MCF 10A (cell line): ENCODE measurements at regions of chr6 and their contacts with region 1.

Region 1: DNA sequence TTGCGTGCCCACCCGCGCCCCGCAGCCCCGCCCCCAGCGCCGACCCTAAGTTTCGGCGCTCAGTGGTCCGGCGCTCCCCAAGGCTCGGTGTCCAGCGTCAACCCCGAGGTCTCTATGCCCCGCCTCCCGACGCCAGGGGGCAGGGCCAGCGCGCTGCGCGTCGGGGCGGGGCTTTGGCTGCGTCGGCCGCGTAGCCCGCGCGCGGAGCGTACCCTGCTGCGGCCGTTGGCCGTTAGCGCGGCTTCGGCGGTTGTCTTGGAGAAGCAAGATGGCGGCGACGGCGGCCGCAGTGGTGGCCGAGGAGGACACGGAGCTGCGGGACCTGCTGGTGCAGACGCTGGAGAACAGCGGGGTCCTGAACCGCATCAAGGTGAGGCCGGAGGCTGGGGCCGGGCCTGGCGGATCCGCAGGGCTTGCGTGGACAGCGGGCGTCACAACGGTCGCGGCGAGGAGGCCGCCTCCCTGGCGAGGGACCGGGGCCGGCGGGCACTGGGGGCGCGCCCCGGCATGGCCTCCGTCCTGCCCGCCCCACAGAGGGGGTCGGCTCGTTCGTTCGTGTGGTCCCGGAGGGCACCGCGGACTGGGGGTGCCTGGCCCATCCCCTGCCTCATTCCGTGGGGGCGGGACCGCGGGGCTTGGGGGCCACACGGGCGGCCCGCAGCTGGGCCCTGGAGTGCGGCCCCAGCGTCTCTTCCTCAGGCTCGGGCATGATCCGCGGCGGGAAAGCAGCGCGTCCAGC is at the start of gene CEP43:
- DNase-seq: peak; percentile 93
- H3K4me3 Mint-ChIP-seq: peak within 1 kb of the TSS; percentile 77
- H3K27ac Mint-ChIP-seq: peak within 1 kb of the TSS; percentile 77
- H3K4me1 Mint-ChIP-seq: peaks cover 30% of the 10 kb centered on the region
- H3K27me3 Mint-ChIP-seq: no peaks in the 10 kb centered on the region
- CTCF ChIP-seq: no peak
- total RNA-seq, gene CEP43: 23.8 and 31.0 TPM in 2 replicates

Region 2: GRCh38 chr6:166411721-166412151 is 587.6 kb before region 1 on chr6:
- CTCF ChIA-PET with region 1: no interaction called
- POLR2A ChIA-PET with region 1: no interaction called
- intact Hi-C with region 1: no loop called
- DNase-seq: no peak
- H3K4me3 Mint-ChIP-seq: no peak overlapping the region
- H3K27ac Mint-ChIP-seq: no peak overlapping the region
- H3K4me1 Mint-ChIP-seq: no peaks in the 10 kb centered on the region
- H3K27me3 Mint-ChIP-seq: no peaks in the 10 kb centered on the region
- CTCF ChIP-seq: no peak

Region 3: DNA sequence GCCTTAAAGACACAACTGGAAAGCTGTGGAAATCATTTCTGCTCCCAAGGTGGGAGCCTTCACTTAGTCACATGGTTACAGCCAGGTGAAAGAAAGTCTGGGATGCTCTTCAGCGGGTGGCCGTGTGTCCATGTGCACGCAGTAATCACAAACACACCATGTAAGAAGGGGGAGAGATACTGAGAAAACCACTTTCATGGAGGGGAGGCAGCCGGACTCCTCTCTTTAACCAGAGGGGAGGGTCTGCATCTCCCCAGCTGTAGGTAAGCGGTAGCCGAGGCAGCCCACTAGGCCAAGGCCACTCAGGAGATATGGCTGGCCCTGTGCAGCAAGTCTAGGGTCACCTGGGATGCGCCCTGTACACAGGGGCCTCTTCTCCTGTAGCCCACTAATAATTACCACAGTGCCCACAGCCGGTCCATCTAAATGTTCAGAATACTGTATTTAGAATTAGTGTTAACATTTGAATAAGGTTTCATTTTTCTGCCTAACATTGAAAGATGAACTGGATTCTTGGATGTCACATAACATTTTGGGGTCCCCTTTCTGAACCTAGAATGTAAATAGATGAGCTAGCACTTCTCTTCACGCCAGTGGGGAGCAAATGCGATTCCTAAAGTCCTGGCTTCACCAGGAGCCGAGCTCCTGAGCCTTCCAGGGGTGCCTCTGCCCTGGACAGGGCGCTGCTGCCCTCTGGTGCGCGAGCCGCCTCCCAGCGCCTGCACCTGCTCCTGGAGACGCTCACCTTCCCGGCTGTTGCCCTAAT is 142.5 kb after region 1 on chr6:
- CTCF ChIA-PET with region 1: no interaction called
- POLR2A ChIA-PET with region 1: no interaction called
- intact Hi-C with region 1: loop called (anchors 1 kb)
- DNase-seq: peak; percentile 49
- H3K4me3 Mint-ChIP-seq: no peak overlapping the region
- H3K27ac Mint-ChIP-seq: no peak overlapping the region
- H3K4me1 Mint-ChIP-seq: no peaks in the 10 kb centered on the region
- H3K27me3 Mint-ChIP-seq: peaks cover 66% of the 10 kb centered on the region
- CTCF ChIP-seq: peak; percentile 67

Region 4: DNA sequence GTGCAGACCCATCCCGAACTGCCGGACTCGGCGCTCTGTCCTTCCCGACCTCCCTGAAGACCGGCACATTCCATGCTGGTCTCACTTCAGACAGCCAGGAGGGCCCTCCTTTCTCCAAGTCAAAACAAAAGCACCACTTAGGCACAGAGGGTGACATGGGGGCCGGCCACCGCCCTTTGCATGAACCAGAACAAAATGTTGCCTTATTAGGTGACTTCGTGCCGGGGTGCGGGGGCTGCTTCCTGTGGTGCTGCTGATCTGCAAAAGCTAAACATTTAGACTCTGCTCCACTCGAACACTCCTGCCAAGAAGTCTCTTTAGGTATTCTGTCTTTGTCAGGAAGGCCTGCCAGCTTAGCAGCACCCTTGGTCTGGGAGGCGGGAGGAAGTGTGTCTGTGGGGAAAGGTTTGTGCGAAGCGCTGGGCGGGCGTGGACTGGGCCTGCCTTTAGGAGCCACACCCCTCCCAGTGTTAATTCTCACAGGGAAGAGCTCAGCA is 1575.4 kb after region 1 on chr6:
- CTCF ChIA-PET with region 1: no interaction called
- POLR2A ChIA-PET with region 1: no interaction called
- intact Hi-C with region 1: no loop called
- DNase-seq: no peak
- H3K4me3 Mint-ChIP-seq: no peak overlapping the region
- H3K27ac Mint-ChIP-seq: no peak overlapping the region
- H3K4me1 Mint-ChIP-seq: no peaks in the 10 kb centered on the region
- H3K27me3 Mint-ChIP-seq: peaks cover 50% of the 10 kb centered on the region
- CTCF ChIP-seq: no peak